ENCODE measurements at regions of chr3 and their contacts with region 1.

Region 1: GRCh38 chr3:179562591-179563270 is at the start of gene ACTL6A:
- DNase-seq: peak; percentile 98 to 100
- H3K4me3 ChIP-seq: peak within 1 kb of the TSS; percentile 62 to 89
- H3K27ac ChIP-seq: peak within 1 kb of the TSS; percentile 88
- H3K4me1 ChIP-seq: peaks cover 24% of the 10 kb centered on the region
- H3K27me3 ChIP-seq: no peaks in the 10 kb centered on the region
- CTCF ChIP-seq: no peak
- POLR2A ChIP-seq: no peak
- total RNA-seq, gene ACTL6A: 21.9 TPM

Region 2: DNA sequence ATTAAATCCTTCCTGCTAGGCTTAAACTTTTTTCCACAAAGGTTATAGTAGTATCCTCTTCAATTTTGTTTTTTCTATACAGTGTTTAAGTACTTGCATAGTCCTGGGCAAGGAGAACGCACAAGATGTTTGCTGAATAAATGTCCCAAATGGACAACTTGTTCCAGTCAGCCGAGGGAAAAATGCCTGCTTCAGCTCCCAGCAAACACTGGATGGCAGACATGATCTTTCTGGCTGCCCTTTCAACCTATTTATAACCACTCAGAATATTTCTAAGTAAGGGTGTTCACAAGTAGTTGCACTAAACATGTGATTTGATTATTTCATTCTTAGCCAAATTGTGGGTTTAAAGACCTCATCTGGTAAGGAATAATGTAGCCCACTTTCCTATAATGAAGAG is 141.2 kb before region 1 on chr3:
- intact Hi-C with region 1: loop called (anchors 10 kb)
- DNase-seq: no peak
- H3K4me3 ChIP-seq: no peak overlapping the region
- H3K27ac ChIP-seq: no peak overlapping the region
- H3K4me1 ChIP-seq: no peaks in the 10 kb centered on the region
- H3K27me3 ChIP-seq: no peaks in the 10 kb centered on the region
- CTCF ChIP-seq: peak in 1 of 3 experiments; percentile 9
- POLR2A ChIP-seq: no peak

Measured in vagina (tissue), 2 donors.